ENCODE measurements at regions of chr2 and their contacts with region 1.

Region 1: GRCh38 chr2:181466661-181467576 is 9.7 kb downstream of the ITGA4 start:
- DNase-seq: peak; percentile 41
- H3K4me3 ChIP-seq: no peak overlapping the region
- H3K27ac ChIP-seq: no peak overlapping the region
- H3K4me1 ChIP-seq: no peaks in the 10 kb centered on the region
- H3K27me3 ChIP-seq: peaks cover 4 to 10% of the 10 kb centered on the region in 2 experiments
- CTCF ChIP-seq: peak; percentile 69 to 70
- POLR2A ChIP-seq: no peak

Region 2: DNA sequence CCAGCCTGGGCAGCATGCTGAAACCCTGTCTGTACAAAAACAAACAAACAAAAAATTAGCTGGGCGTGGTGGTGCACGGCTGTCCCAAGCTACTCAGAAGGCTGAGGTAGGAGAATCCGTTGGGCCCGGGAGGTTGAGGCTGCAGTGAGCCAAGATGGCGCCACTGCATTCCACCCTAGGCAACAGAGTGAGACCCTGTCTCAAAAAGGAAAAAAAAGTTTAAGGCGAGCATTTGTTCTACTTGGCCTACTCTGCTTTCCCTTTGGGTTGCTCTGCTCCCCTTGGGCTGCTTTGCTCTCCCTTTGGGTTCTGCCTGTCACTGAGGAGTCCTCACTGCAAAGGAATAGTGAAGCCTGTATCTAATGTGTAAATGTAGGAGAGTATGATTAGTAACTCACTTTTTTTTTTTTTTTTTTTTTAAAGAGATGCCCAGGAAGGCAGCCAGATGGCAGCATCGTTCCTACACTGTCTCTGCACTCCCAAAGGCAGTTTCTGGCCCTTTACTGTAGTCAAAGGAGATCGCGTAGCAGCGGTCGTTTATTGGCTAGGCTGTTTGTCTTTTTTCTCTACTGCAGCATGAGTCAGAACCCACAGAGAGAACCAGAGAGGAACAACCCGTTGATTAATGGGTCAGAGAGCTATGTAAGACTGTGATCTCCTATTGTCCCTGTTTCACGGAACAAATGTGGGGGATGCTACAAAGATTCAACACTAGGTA is 1341.5 kb before region 1 on chr2:
- CTCF ChIA-PET with region 1: interaction called, 148 read pairs
- POLR2A ChIA-PET with region 1: no interaction called
- dilution Hi-C with region 1: no loop called
- intact Hi-C with region 1: loop called (anchors 1 kb)
- DNase-seq: peak; percentile 80
- H3K4me3 ChIP-seq: no peak overlapping the region
- H3K27ac ChIP-seq: no peak overlapping the region
- H3K4me1 ChIP-seq: no peaks in the 10 kb centered on the region
- H3K27me3 ChIP-seq: peaks cover 4 to 12% of the 10 kb centered on the region in 2 experiments
- CTCF ChIP-seq: peak; percentile 38 to 55
- POLR2A ChIP-seq: no peak

Region 3: GRCh38 chr2:181070119-181070835 is 396.6 kb before region 1 on chr2:
- CTCF ChIA-PET with region 1: interaction called, 11 read pairs
- POLR2A ChIA-PET with region 1: no interaction called
- dilution Hi-C with region 1: no loop called
- intact Hi-C with region 1: no loop called
- DNase-seq: peak; percentile 73
- H3K4me3 ChIP-seq: no peak overlapping the region
- H3K27ac ChIP-seq: no peak overlapping the region
- H3K4me1 ChIP-seq: peaks cover 47% of the 10 kb centered on the region
- H3K27me3 ChIP-seq: no peaks in the 10 kb centered on the region
- CTCF ChIP-seq: no peak
- POLR2A ChIP-seq: no peak

Region 4: GRCh38 chr2:181085734-181086133 is 381.2 kb before region 1 on chr2:
- CTCF ChIA-PET with region 1: interaction called, 16 read pairs
- POLR2A ChIA-PET with region 1: no interaction called
- dilution Hi-C with region 1: no loop called
- intact Hi-C with region 1: no loop called
- DNase-seq: no peak
- H3K4me3 ChIP-seq: no peak overlapping the region
- H3K27ac ChIP-seq: no peak overlapping the region
- H3K4me1 ChIP-seq: no peaks in the 10 kb centered on the region
- H3K27me3 ChIP-seq: no peaks in the 10 kb centered on the region
- CTCF ChIP-seq: no peak
- POLR2A ChIP-seq: no peak

Region 5: GRCh38 chr2:181152226-181152625 is 314.7 kb before region 1 on chr2:
- CTCF ChIA-PET with region 1: no interaction called
- POLR2A ChIA-PET with region 1: no interaction called
- dilution Hi-C with region 1: no loop called
- intact Hi-C with region 1: no loop called
- DNase-seq: no peak
- H3K4me3 ChIP-seq: no peak overlapping the region
- H3K27ac ChIP-seq: no peak overlapping the region
- H3K4me1 ChIP-seq: no peaks in the 10 kb centered on the region
- H3K27me3 ChIP-seq: peaks cover 0 to 5% of the 10 kb centered on the region in 2 experiments
- CTCF ChIP-seq: no peak
- POLR2A ChIP-seq: no peak

Region 6: DNA sequence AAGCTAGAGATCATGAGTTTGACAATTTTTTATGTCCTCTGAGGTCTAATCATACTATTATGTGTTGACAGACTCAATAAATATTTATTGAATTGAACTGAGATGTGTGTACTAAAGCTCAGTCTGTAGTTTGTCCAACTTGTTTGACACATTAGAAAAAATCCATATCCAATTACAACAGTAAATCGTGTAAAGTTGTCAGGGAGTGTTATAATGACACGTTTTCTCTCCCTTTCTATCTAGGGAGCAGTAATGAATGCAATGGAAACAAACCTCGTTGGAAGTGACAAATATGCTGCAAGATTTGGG is 18.7 kb after region 1 on chr2:
- CTCF ChIA-PET with region 1: interaction called, 45 read pairs
- POLR2A ChIA-PET with region 1: no interaction called
- dilution Hi-C with region 1: no loop called
- intact Hi-C with region 1: no loop called
- DNase-seq: no peak
- H3K4me3 ChIP-seq: no peak overlapping the region
- H3K27ac ChIP-seq: no peak overlapping the region
- H3K4me1 ChIP-seq: no peaks in the 10 kb centered on the region
- H3K27me3 ChIP-seq: no peaks in the 10 kb centered on the region
- CTCF ChIP-seq: no peak
- POLR2A ChIP-seq: no peak

Region 7: DNA sequence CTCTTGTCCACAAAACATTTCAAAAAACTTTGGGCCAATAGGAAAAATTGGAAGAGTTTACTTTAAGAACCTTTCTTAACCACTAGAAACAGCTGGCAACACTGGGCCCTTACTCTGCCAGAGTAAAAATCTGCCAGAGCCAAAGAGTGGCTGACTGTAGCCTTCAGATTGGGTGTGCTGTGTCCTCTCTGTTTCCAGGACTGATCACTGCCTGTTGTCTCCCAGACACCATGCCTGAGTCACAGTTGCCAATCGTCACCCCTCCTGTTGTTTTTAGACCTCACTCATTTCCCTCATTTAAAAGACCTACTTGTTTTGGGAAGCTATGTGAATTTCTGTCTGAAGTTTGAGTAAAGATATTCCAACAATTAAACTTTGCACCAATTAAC is 677.9 kb after region 1 on chr2:
- CTCF ChIA-PET with region 1: no interaction called
- POLR2A ChIA-PET with region 1: no interaction called
- dilution Hi-C with region 1: no loop called
- intact Hi-C with region 1: no loop called
- DNase-seq: peak; percentile 84
- H3K4me3 ChIP-seq: no peak overlapping the region
- H3K27ac ChIP-seq: peak overlapping the region; percentile 91
- H3K4me1 ChIP-seq: peaks cover 17% of the 10 kb centered on the region
- H3K27me3 ChIP-seq: no peaks in the 10 kb centered on the region
- CTCF ChIP-seq: no peak
- POLR2A ChIP-seq: no peak